ENCODE measurements at regions of chr19 and their contacts with region 1.

Region 1: GRCh38 chr19:44903602-44904425 is 1.8 kb upstream of the APOE start:
- DNase-seq: peak; percentile 89
- ATAC-seq: peak; percentile 8
- H3K4me3 Mint-ChIP-seq: no peak overlapping the region
- H3K27ac Mint-ChIP-seq: peak overlapping the region; percentile 55; the same call in 1 of the 2 replicates
- H3K4me1 Mint-ChIP-seq: peaks cover 21% of the 10 kb centered on the region
- H3K27me3 Mint-ChIP-seq: no peaks in the 10 kb centered on the region
- CTCF ChIP-seq: peak; percentile 99

Region 2: GRCh38 chr19:44845612-44846454 is 58.0 kb before region 1 on chr19 and contains the start of gene NECTIN2:
- CTCF ChIA-PET with region 1: interaction called, 9 read pairs
- POLR2A ChIA-PET with region 1: interaction called, 17 read pairs
- DNase-seq: peak; percentile 100
- ATAC-seq: peak; percentile 59
- H3K4me3 Mint-ChIP-seq: peak within 1 kb of the TSS; percentile 97
- H3K27ac Mint-ChIP-seq: peak within 1 kb of the TSS; percentile 99
- H3K4me1 Mint-ChIP-seq: peaks cover 23% of the 10 kb centered on the region
- H3K27me3 Mint-ChIP-seq: peaks cover 14% of the 10 kb centered on the region
- CTCF ChIP-seq: peak; percentile 57
- total RNA-seq, gene NECTIN2: 164 to 170 TPM (median 168 TPM) in 3 replicates

Region 3: GRCh38 chr19:44890366-44891015 is 13.3 kb before region 1 on chr19:
- CTCF ChIA-PET with region 1: interaction called, 13 read pairs
- POLR2A ChIA-PET with region 1: interaction called, 12 read pairs
- DNase-seq: peak; percentile 100
- ATAC-seq: peak; percentile 90
- H3K4me3 Mint-ChIP-seq: peak overlapping the region; percentile 64
- H3K27ac Mint-ChIP-seq: peak overlapping the region; percentile 97
- H3K4me1 Mint-ChIP-seq: peaks cover 21% of the 10 kb centered on the region
- H3K27me3 Mint-ChIP-seq: no peaks in the 10 kb centered on the region; the same call in 1 of the 2 replicates
- CTCF ChIP-seq: no peak

Region 4: GRCh38 chr19:44939668-44940067 is 35.9 kb after region 1 on chr19:
- CTCF ChIA-PET with region 1: interaction called, 11 read pairs
- POLR2A ChIA-PET with region 1: interaction called, 4 read pairs
- DNase-seq: no peak
- ATAC-seq: no peak
- H3K4me3 Mint-ChIP-seq: no peak overlapping the region
- H3K27ac Mint-ChIP-seq: no peak overlapping the region
- H3K4me1 Mint-ChIP-seq: 0 out of 2 replicates have a peak, but pooled peaks cover 3% of the 10 kb centered on the region
- H3K27me3 Mint-ChIP-seq: no peaks in the 10 kb centered on the region; the same call in 1 of the 2 replicates
- CTCF ChIP-seq: no peak

Region 5: DNA sequence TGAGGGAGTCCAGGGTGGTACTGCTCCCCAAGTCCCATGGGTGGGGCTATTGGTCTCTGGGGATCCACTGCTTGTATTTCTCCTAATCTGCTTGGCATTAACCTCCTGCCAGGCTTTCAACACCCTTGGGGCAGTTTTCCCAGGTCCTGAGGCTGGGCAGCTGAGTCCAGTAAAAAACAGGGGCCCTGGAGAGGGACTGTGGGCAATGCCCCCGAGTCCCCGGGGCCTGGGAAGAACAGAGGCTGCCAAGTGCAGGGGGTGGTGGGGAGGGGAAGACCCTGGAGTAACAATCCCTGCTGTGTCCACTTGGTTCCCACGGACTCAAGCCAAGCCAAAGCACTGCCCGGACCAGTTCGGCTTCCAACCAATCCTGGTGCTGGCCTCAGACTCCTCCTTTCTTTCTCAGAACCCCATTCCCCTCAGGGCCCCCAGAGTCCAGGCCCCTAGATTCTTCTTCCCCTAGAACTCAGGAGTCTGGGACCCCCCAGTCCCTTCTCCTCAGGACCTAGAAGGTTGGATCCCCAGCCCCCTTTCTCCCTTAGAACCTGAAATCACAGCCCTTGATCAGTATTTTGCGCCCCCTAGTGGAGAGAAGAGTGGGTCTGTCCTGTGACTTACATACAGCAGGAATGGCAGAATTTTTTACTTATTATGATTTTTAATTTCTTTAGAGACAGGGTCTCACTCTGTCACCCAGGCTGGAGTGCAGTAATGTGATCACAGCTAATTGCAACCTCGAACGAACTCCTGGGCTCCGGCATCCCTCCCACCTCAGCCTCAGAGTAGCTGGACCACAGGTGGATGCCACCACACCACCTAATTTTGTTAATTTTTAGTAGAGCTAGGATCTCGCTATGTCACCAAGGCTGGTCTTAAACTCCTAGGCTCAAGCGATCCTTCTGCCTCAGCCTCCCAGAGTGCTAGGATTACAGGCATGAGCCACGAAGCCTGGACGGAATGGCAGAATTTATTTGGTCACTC is 47.7 kb after region 1 on chr19:
- CTCF ChIA-PET with region 1: interaction called, 54 read pairs
- POLR2A ChIA-PET with region 1: interaction called, 6 read pairs
- DNase-seq: peak; percentile 57
- ATAC-seq: peak; percentile 19
- H3K4me3 Mint-ChIP-seq: no peak overlapping the region
- H3K27ac Mint-ChIP-seq: no peak overlapping the region
- H3K4me1 Mint-ChIP-seq: peaks cover 14% of the 10 kb centered on the region
- H3K27me3 Mint-ChIP-seq: no peaks in the 10 kb centered on the region
- CTCF ChIP-seq: peak; percentile 80

Measured in WTC11 (cell line).